PC-9 (cell line): ENCODE measurements at regions of chr6 and their contacts with region 1.

Region 1: DNA sequence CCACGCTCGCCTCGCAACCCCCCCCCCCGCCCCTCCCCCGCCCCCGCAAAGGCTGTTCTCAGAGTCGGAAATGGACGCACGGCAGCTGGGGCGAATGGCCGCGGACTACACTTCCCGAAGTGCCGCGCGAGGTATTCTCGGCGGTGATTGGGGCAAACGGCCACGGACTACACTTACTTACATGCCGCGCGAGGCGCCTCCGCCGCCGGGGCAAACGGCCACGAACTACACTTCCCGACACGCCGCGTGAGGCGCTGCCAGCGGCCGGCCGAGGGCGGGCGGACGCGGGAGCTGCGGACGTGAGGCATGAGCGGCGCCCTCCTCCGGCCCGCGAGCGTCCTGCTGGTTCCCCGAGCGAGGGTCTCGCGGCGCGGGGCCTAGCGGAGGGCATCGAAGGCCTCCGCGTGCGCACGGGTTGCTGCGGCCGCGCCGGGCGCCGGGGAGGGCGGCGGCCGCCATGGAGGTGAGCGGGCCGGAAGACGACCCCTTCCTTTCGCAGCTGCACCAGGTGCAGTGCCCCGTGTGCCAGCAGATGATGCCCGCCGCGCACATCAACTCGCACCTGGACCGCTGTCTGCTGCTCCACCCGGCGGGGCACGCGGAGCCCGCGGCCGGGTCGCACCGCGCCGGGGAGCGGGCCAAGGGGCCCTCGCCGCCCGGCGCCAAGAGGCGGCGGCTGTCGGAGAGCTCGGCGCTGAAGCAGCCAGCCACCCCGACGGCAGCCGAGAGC is at the start of gene WRNIP1:
- DNase-seq: peak; percentile 93 to 98
- H3K4me3 ChIP-seq: peak within 1 kb of the TSS; percentile 83
- H3K27ac ChIP-seq: peak within 1 kb of the TSS; percentile 63
- H3K4me1 ChIP-seq: peaks cover 13% of the 10 kb centered on the region
- H3K27me3 ChIP-seq: no peaks in the 10 kb centered on the region
- CTCF ChIP-seq: no peak; the same call in 1 of the 2 replicates
- total RNA-seq, gene WRNIP1: 61.4 and 69.5 TPM in 2 replicates

Region 2: GRCh38 chr6:1917626-1918371 is 847.5 kb before region 1 on chr6:
- CTCF ChIA-PET with region 1: no interaction called
- POLR2A ChIA-PET with region 1: no interaction called
- intact Hi-C with region 1: loop called (anchors 10 kb)
- DNase-seq: peak; percentile 91 to 94
- H3K4me3 ChIP-seq: no peak overlapping the region
- H3K27ac ChIP-seq: peak overlapping the region; percentile 89
- H3K4me1 ChIP-seq: peaks cover 30% of the 10 kb centered on the region
- H3K27me3 ChIP-seq: no peaks in the 10 kb centered on the region
- CTCF ChIP-seq: no peak

Region 3: GRCh38 chr6:2791124-2791974 is 26.0 kb after region 1 on chr6:
- CTCF ChIA-PET with region 1: no interaction called
- POLR2A ChIA-PET with region 1: interaction called, 11 read pairs
- intact Hi-C with region 1: no loop called
- DNase-seq: peak; percentile 71
- H3K4me3 ChIP-seq: no peak overlapping the region
- H3K27ac ChIP-seq: peak overlapping the region; percentile 74
- H3K4me1 ChIP-seq: peaks cover 4% of the 10 kb centered on the region; the same call in 1 of the 2 replicates
- H3K27me3 ChIP-seq: no peaks in the 10 kb centered on the region
- CTCF ChIP-seq: peak; percentile 80

Region 4: GRCh38 chr6:2862712-2863181 is 97.4 kb after region 1 on chr6:
- CTCF ChIA-PET with region 1: no interaction called
- POLR2A ChIA-PET with region 1: interaction called, 16 read pairs
- intact Hi-C with region 1: no loop called
- DNase-seq: no peak
- H3K4me3 ChIP-seq: no peak overlapping the region
- H3K27ac ChIP-seq: no peak overlapping the region
- H3K4me1 ChIP-seq: no peaks in the 10 kb centered on the region
- H3K27me3 ChIP-seq: no peaks in the 10 kb centered on the region
- CTCF ChIP-seq: no peak

Region 5: DNA sequence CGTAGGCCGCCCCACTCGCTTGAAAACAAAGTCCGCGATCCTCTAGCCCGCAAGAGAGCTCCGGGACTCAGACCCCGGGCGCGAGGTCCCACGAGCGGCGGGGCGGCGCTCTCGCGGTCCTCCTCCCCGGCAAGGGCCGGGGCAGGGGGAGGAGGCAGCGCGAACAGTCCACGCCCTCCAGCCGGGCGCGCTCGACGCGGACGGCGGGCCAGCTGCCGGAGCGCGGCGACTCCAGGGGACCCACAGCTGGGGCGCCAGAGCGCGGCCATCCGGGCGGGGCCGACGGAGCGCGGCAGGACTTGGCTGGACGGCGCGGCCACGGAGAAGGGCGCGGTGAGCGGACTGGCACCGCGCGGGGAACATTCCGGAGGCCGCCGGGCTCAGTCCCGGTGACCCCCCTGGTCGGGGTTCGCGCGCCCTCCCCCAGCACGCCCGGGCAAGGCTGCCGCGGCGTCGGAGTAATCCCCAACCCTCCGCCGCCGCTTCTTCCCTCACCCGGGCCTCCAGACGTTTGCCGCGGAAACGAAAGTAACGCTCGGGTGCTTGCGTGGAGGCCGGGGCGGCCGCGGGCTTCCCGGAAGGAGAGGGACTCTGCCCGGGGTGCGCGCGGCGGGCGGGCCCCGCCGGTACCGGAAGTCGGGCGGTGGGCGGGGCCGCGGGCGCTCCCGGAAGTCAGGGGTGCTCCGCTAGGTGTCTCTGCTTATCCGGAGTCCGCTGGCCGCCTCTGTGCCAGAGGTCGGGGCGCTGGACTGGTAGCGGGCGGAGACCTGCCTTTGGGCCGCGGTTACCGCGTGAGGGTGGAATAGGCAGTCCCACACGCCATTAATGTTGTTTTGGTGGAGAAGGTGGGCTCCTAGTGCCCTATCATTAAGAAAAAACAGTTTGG is 303.2 kb after region 1 on chr6 and contains the start of gene RIPK1:
- CTCF ChIA-PET with region 1: no interaction called
- POLR2A ChIA-PET with region 1: no interaction called
- intact Hi-C with region 1: loop called (anchors 10 kb)
- DNase-seq: peak; percentile 70 to 93
- H3K4me3 ChIP-seq: peak within 1 kb of the TSS; percentile 89
- H3K27ac ChIP-seq: peak within 1 kb of the TSS; percentile 83
- H3K4me1 ChIP-seq: peaks cover 11% of the 10 kb centered on the region
- H3K27me3 ChIP-seq: no peaks in the 10 kb centered on the region
- CTCF ChIP-seq: no peak
- total RNA-seq, gene RIPK1: 13.9 and 14.8 TPM in 2 replicates